Naive thymus-derived CD4-positive, alpha-beta T cell (primary cell): ENCODE measurements at regions of chr13 and their contacts with region 1.

Region 1: GRCh38 chr13:48412881-48413351 is at the start of gene LPAR6:
- DNase-seq: peak in 7 of 9 donors; percentile 30 to 55 (median 47)
- ATAC-seq: peak; percentile 67
- H3K4me3 ChIP-seq: peak within 1 kb of the TSS; percentile 73
- H3K4me3 Mint-ChIP-seq: peak within 1 kb of the TSS; percentile 86 to 100 (median 98)
- H3K27ac ChIP-seq: peak within 1 kb of the TSS; percentile 90
- H3K27ac Mint-ChIP-seq: peak within 1 kb of the TSS; percentile 92 to 100 (median 94)
- H3K4me1 ChIP-seq: peaks cover 9 to 19% of the 10 kb centered on the region in 2 donors
- H3K4me1 Mint-ChIP-seq: peaks cover 19 to 47% (median 40%) of the 10 kb centered on the region in 7 donors
- H3K27me3 ChIP-seq: no peaks in the 10 kb centered on the region
- H3K27me3 Mint-ChIP-seq: no peaks in the 10 kb centered on the region
- total RNA-seq, gene LPAR6: 24.1 to 60.4 (median 32.8) TPM

Region 2: GRCh38 chr13:48431987-48432615 is 19.2 kb after region 1 on chr13:
- CTCF ChIA-PET with region 1: interaction called, 3 read pairs
- POLR2A ChIA-PET with region 1: no interaction called
- intact Hi-C with region 1: loop called in 1 of 2 experiments (anchors 2 kb)
- DNase-seq: no peak
- ATAC-seq: no peak
- H3K4me3 ChIP-seq: no peak overlapping the region
- H3K4me3 Mint-ChIP-seq: peak overlapping the region in 9 of 10 donors; percentile 11 to 79 (median 54)
- H3K27ac ChIP-seq: no peak overlapping the region
- H3K27ac Mint-ChIP-seq: peak overlapping the region; percentile 0 to 91 (median 50)
- H3K4me1 ChIP-seq: peaks cover 10 to 32% of the 10 kb centered on the region in 2 donors
- H3K4me1 Mint-ChIP-seq: peaks cover 22 to 68% (median 59%) of the 10 kb centered on the region in 7 donors
- H3K27me3 ChIP-seq: no peaks in the 10 kb centered on the region
- H3K27me3 Mint-ChIP-seq: no peaks in the 10 kb centered on the region

Region 3: GRCh38 chr13:48448959-48449614 is 36.2 kb after region 1 on chr13:
- CTCF ChIA-PET with region 1: no interaction called
- POLR2A ChIA-PET with region 1: no interaction called
- intact Hi-C with region 1: loop called (anchors 2 to 5 kb)
- DNase-seq: no peak
- ATAC-seq: no peak
- H3K4me3 ChIP-seq: no peak overlapping the region
- H3K4me3 Mint-ChIP-seq: peak overlapping the region; percentile 4 to 79 (median 70)
- H3K27ac ChIP-seq: no peak overlapping the region
- H3K27ac Mint-ChIP-seq: peak overlapping the region in 4 of 9 donors; percentile 3 to 61 (median 42)
- H3K4me1 ChIP-seq: peaks cover 0 to 5% of the 10 kb centered on the region in 2 donors
- H3K4me1 Mint-ChIP-seq: peaks cover 12 to 46% (median 35%) of the 10 kb centered on the region in 7 donors
- H3K27me3 ChIP-seq: no peaks in the 10 kb centered on the region
- H3K27me3 Mint-ChIP-seq: no peaks in the 10 kb centered on the region

Region 4: DNA sequence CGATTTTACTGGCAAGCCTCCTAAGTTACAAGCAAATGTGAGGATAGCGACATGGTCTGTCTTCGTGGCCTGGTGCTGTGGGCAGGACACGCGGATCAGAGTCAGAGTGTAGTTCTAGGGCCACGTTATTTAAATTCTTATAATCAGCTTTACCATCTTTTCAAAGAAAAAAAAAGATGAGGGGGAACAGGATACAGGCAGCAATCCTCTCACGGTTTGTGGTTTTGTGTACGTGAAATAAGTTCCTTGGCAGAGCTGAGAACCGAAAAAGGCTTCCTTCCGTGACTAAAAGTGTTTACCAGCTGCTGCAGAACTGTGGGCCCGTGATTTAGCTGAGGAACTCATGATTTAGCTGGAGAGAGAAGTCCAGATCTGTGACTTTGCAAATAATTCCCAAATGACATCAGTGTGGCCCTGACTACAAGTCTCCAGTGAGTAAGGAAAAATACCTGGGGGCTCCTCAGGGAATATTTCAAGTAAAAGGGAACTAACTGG is 92.7 kb after region 1 on chr13:
- CTCF ChIA-PET with region 1: no interaction called
- POLR2A ChIA-PET with region 1: interaction called, 5 read pairs
- intact Hi-C with region 1: loop called (anchors 1 kb)
- DNase-seq: peak in 7 of 9 donors; percentile 73 to 88 (median 84)
- ATAC-seq: peak; percentile 85
- H3K4me3 ChIP-seq: peak overlapping the region; percentile 37
- H3K4me3 Mint-ChIP-seq: peak overlapping the region; percentile 51 to 86 (median 76)
- H3K27ac ChIP-seq: peak overlapping the region; percentile 59
- H3K27ac Mint-ChIP-seq: peak overlapping the region; percentile 83 to 98 (median 91)
- H3K4me1 ChIP-seq: peaks cover 34 to 47% of the 10 kb centered on the region in 2 donors
- H3K4me1 Mint-ChIP-seq: peaks cover 47 to 78% (median 61%) of the 10 kb centered on the region in 7 donors
- H3K27me3 ChIP-seq: no peaks in the 10 kb centered on the region
- H3K27me3 Mint-ChIP-seq: peaks cover 0 to 11% (median 0%) of the 10 kb centered on the region in 5 donors